Activated CD8-positive, alpha-beta memory T cell treated with anti-CD3 and anti-CD28 coated beads, Interleukin-2, amount 10 ng/mL, durations not matched to agents 7 days and 5 days (primary cell): ENCODE measurements at regions of chr3 and their contacts with region 1.

Region 1: GRCh38 chr3:48400824-48401433 is 28.9 kb downstream of the FBXW12 start:
- DNase-seq: peak; percentile 73
- ATAC-seq: peak; percentile 83
- H3K4me3 Mint-ChIP-seq: no peak overlapping the region
- H3K27ac Mint-ChIP-seq: no peak overlapping the region
- H3K4me1 Mint-ChIP-seq: no peaks in the 10 kb centered on the region
- H3K27me3 Mint-ChIP-seq: peaks cover 4% of the 10 kb centered on the region

Region 2: GRCh38 chr3:48194446-48195071 is 206.4 kb before region 1 on chr3:
- CTCF ChIA-PET with region 1: no interaction called
- DNase-seq: peak; percentile 50
- ATAC-seq: peak; percentile 33
- H3K4me3 Mint-ChIP-seq: no peak overlapping the region
- H3K27ac Mint-ChIP-seq: no peak overlapping the region
- H3K4me1 Mint-ChIP-seq: peaks cover 6% of the 10 kb centered on the region
- H3K27me3 Mint-ChIP-seq: peaks cover 12% of the 10 kb centered on the region

Region 3: DNA sequence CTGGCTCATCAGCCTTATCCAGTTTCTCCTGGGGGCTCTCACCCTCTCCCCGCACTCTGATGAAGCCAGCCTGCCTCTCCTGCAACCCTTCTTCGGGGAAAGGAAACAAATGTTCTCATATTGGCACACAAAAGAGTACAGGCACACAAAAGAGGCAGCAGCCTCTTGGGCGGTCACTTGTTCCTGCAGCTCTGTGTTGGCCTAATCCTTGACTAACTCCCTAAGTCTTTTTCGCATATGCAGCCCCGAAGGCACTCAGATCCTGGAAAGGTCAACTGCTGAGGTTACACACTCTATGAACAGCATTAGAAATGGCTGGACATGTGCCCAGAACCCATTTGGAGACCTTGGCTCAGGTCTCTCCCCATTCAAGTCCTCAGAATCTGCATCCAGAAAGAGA is 185.1 kb before region 1 on chr3:
- CTCF ChIA-PET with region 1: no interaction called
- DNase-seq: no peak
- ATAC-seq: no peak
- H3K4me3 Mint-ChIP-seq: no peak overlapping the region
- H3K27ac Mint-ChIP-seq: no peak overlapping the region
- H3K4me1 Mint-ChIP-seq: no peaks in the 10 kb centered on the region
- H3K27me3 Mint-ChIP-seq: peaks cover 9% of the 10 kb centered on the region

Region 4: GRCh38 chr3:48273594-48274211 is 127.2 kb before region 1 on chr3:
- CTCF ChIA-PET with region 1: interaction called, 43 read pairs
- DNase-seq: peak; percentile 68
- ATAC-seq: peak; percentile 61
- H3K4me3 Mint-ChIP-seq: no peak overlapping the region
- H3K27ac Mint-ChIP-seq: no peak overlapping the region
- H3K4me1 Mint-ChIP-seq: peaks cover 17% of the 10 kb centered on the region
- H3K27me3 Mint-ChIP-seq: no peaks in the 10 kb centered on the region

Region 5: DNA sequence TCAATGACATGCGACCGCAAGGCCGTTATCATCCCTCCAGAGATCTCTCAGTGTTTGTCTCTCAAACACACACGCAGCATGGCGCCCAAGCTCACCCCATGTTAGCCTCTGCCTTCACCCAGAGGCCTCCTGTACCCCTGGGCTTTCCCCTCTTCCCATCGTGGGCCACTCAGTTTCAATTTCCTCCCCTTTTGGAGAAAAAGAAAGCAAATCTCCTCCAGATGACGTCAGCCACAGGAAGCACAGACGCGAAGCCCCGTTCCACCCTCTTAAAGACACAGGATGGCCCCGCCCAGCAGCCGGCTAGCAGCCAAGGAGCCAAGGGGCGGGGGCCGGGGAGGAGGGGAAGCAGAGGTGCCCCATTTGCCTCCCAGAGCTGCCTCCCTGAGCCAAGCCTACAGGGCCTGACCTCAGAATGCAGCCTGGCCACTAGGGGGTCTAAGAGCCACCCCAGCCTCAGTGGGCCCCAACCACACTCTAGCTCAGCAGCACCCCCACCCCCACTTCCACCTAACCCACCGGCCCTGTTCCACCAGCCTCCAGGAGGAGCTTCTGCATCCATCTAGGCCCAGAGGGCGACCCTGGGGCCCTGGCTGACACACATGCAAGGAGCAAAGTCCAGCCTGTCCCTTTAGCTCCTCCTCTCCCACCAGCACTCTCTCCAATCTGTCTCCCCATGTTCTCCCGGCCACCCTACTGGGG is 72.1 kb after region 1 on chr3:
- CTCF ChIA-PET with region 1: interaction called, 10 read pairs
- DNase-seq: peak; percentile 99
- ATAC-seq: peak; percentile 88
- H3K4me3 Mint-ChIP-seq: peak overlapping the region; percentile 85
- H3K27ac Mint-ChIP-seq: peak overlapping the region; percentile 95
- H3K4me1 Mint-ChIP-seq: peaks cover 73% of the 10 kb centered on the region
- H3K27me3 Mint-ChIP-seq: no peaks in the 10 kb centered on the region

Region 6: GRCh38 chr3:48548729-48549705 is 148.1 kb after region 1 on chr3:
- CTCF ChIA-PET with region 1: interaction called, 78 read pairs
- DNase-seq: peak; percentile 89
- ATAC-seq: peak; percentile 98
- H3K4me3 Mint-ChIP-seq: no peak overlapping the region
- H3K27ac Mint-ChIP-seq: no peak overlapping the region
- H3K4me1 Mint-ChIP-seq: peaks cover 9% of the 10 kb centered on the region
- H3K27me3 Mint-ChIP-seq: no peaks in the 10 kb centered on the region

Region 7: DNA sequence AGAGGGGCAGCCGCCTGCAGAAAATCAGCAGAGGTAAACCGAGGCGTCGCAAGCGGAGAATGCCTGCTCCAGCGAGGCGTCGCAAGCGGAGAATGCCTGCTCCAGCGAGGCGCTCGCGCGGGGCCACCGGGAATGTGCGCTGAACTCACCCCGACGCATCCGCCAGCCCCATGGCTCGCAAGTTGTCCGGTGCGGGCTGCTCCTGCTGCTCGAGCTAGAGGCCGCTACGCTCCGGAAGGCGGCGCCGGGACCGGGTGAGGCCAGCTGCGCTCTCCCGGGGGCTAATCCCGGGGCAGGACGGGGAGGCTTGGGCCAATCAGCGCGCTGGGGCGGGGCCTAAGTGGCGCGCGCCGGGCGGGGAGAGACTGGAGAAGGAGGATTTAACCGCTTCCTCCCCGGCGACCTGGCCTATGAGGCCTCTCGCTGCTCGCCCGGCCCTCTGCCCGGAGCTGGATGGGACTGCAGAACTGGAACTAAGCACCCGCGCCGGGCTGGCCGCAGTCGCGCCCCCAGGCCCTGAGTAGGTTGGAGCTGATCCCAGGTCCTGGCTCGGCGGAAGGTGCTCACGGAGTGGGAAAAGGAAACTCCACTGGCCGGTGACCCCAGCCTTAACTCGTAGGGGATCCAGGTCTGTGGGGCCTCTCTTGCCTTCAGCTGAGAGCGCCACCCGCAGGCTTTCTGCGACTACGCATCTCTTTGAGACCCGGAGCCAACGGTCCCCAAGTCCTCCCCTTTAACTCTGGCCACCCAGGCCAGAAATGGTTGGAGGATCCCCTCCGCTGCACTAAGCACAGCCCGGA is 234.5 kb after region 1 on chr3 and contains the start of gene SLC26A6:
- CTCF ChIA-PET with region 1: interaction called, 12 read pairs
- DNase-seq: peak; percentile 96
- ATAC-seq: peak; percentile 96
- H3K4me3 Mint-ChIP-seq: peak within 1 kb of the TSS; percentile 85
- H3K27ac Mint-ChIP-seq: peak within 1 kb of the TSS; percentile 88
- H3K4me1 Mint-ChIP-seq: peaks cover 20% of the 10 kb centered on the region
- H3K27me3 Mint-ChIP-seq: no peaks in the 10 kb centered on the region
- total RNA-seq, gene SLC26A6: 44.9 to 59.0 TPM